H1 (cell line): ENCODE measurements at regions of chr12 and their contacts with region 1.

Region 1: GRCh38 chr12:67025543-67026114 is 243.5 kb upstream of the CAND1 start:
- DNase-seq: peak; percentile 44 to 91
- H3K4me3 ChIP-seq: no peak overlapping the region
- H3K27ac ChIP-seq: no peak overlapping the region
- H3K4me1 ChIP-seq: no peaks in the 10 kb centered on the region
- H3K27me3 ChIP-seq: no peaks in the 10 kb centered on the region
- CTCF ChIP-seq: peak; percentile 66 to 71 (median 69)
- EP300 ChIP-seq: no peak
- POLR2A ChIP-seq: no peak
- RAD21 ChIP-seq: peak; percentile 77 to 83

Region 2: DNA sequence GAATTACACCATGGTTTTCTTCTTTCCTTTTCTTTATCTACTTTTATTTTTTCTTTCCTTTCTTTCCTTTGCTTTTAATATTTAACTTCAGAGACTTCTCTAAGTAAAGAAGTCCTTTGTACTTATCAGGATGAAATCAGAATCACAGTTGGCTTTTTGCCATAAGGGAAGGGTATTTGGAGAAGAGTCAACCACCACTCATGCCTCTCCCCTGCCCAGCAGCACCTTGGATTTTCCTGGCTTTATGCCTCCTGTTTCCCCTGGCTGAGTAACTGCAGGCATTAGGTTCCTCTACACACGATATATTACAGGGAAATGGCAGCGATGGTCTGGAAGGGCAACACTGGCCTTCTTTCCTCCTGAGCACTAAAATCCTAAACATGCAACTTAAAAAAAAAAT is 22.9 kb before region 1 on chr12:
- CTCF ChIA-PET with region 1: interaction called, 11 read pairs
- POLR2A ChIA-PET with region 1: no interaction called
- DNase-seq: no peak
- H3K4me3 ChIP-seq: no peak overlapping the region
- H3K27ac ChIP-seq: no peak overlapping the region
- H3K4me1 ChIP-seq: no peaks in the 10 kb centered on the region
- H3K27me3 ChIP-seq: no peaks in the 10 kb centered on the region
- CTCF ChIP-seq: no peak
- EP300 ChIP-seq: no peak
- POLR2A ChIP-seq: no peak
- RAD21 ChIP-seq: no peak

Region 3: DNA sequence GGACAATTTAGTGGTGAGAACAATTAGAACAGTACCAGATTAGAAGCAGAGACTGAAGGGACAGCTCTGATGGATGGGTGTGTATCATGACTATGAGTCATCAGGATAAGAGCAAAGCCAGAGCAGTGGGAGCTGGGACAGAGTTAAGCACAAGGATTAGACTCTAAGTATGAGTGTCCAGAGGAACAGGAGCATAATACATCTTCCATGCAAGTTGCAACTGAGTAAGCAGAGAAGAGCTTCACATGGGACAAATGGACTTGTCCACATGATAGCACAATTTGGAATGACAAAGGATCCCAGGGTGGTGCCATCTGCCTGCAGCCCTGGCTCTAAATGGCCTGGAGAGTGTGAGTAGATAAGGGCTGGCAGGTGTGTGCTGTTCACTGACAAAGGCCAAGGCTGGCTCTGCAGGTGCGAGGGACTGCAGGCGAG is 17.1 kb after region 1 on chr12:
- CTCF ChIA-PET with region 1: interaction called, 10 read pairs
- POLR2A ChIA-PET with region 1: interaction called, 4 read pairs
- DNase-seq: no peak
- H3K4me3 ChIP-seq: no peak overlapping the region
- H3K27ac ChIP-seq: no peak overlapping the region
- H3K4me1 ChIP-seq: peaks cover 0 to 15% (median 6%) of the 10 kb centered on the region in 4 experiments; a peak in 6 of 7 replicates
- H3K27me3 ChIP-seq: no peaks in the 10 kb centered on the region
- CTCF ChIP-seq: no peak
- EP300 ChIP-seq: no peak
- POLR2A ChIP-seq: no peak
- RAD21 ChIP-seq: no peak

Region 4: GRCh38 chr12:67061860-67062592 is 36.4 kb after region 1 on chr12:
- CTCF ChIA-PET with region 1: interaction called, 10 read pairs
- POLR2A ChIA-PET with region 1: no interaction called
- DNase-seq: no peak
- H3K4me3 ChIP-seq: no peak overlapping the region
- H3K27ac ChIP-seq: no peak overlapping the region; the same call in 1 of the 2 replicates
- H3K4me1 ChIP-seq: peaks cover 0 to 2% (median 0%) of the 10 kb centered on the region in 4 experiments; a peak in 1 of 7 replicates
- H3K27me3 ChIP-seq: no peaks in the 10 kb centered on the region
- CTCF ChIP-seq: no peak
- EP300 ChIP-seq: no peak
- POLR2A ChIP-seq: no peak
- RAD21 ChIP-seq: no peak

Region 5: DNA sequence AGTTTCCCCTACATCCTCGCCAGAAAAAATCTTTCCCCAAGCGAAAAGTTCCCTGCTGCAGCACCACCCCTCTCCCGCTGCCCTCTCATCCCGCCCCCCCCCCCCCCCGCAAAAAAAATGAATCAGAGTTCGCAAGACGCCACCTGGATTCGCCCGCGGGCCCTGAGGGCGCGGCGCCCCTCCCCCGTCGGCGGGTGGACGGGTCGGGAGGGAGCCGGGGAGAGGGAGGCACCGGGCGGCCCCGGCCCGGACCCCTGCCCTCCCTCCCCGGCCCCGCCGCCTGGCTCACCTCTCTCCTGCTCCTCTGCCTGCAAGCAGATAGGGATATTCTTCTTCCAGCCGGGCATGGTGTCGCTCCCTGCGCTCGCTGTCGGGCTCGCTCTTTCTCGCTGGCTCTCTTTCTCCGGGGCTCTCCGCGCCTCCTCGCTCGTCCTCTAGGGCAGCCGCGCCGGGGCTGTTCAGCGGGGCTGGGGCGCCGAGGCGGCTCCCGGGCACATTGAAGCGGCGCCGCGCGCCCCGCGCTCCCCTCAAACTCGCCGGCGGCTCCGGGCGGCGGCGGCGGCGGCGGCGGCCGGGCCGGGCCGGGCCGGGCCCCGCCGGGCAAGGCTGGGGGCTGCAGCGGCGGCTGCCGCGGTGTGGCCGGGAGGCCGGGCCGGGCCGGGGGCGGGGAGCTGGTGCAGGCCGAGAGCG is 43.3 kb after region 1 on chr12:
- CTCF ChIA-PET with region 1: interaction called, 10 read pairs
- POLR2A ChIA-PET with region 1: interaction called, 5 read pairs
- DNase-seq: peak; percentile 25 to 78
- H3K4me3 ChIP-seq: peak overlapping the region; percentile 59 to 86 (median 70)
- H3K27ac ChIP-seq: no peak overlapping the region
- H3K4me1 ChIP-seq: peaks cover 4 to 10% (median 6%) of the 10 kb centered on the region in 4 experiments
- H3K27me3 ChIP-seq: no peaks in the 10 kb centered on the region; a peak in 2 of 7 replicates
- CTCF ChIP-seq: peak in 1 of 3 experiments; percentile 6; a peak in 1 of 4 replicates
- EP300 ChIP-seq: no peak
- POLR2A ChIP-seq: no peak
- RAD21 ChIP-seq: no peak

Region 6: GRCh38 chr12:67222302-67222701 is 196.7 kb after region 1 on chr12:
- CTCF ChIA-PET with region 1: interaction called, 32 read pairs
- POLR2A ChIA-PET with region 1: no interaction called
- DNase-seq: no peak
- H3K4me3 ChIP-seq: no peak overlapping the region
- H3K27ac ChIP-seq: no peak overlapping the region
- H3K4me1 ChIP-seq: peaks cover 0 to 4% (median 2%) of the 10 kb centered on the region in 4 experiments; a peak in 3 of 7 replicates
- H3K27me3 ChIP-seq: no peaks in the 10 kb centered on the region
- CTCF ChIP-seq: peak in 2 of 3 experiments; percentile 40 to 66; a peak in 2 of 4 replicates
- EP300 ChIP-seq: no peak
- POLR2A ChIP-seq: no peak
- RAD21 ChIP-seq: peak; percentile 67 to 69